ENCODE measurements at regions of chr1 and their contacts with region 1.

Region 1: GRCh38 chr1:101262630-101263348 is 26.0 kb downstream of the S1PR1 start:
- DNase-seq: no peak
- ATAC-seq: peak; percentile 49
- H3K4me3 Mint-ChIP-seq: peak overlapping the region; percentile 37
- H3K27ac Mint-ChIP-seq: peak overlapping the region; percentile 27
- H3K4me1 Mint-ChIP-seq: peaks cover 60% of the 10 kb centered on the region
- H3K27me3 Mint-ChIP-seq: no peaks in the 10 kb centered on the region
- CTCF ChIP-seq: no peak

Region 2: DNA sequence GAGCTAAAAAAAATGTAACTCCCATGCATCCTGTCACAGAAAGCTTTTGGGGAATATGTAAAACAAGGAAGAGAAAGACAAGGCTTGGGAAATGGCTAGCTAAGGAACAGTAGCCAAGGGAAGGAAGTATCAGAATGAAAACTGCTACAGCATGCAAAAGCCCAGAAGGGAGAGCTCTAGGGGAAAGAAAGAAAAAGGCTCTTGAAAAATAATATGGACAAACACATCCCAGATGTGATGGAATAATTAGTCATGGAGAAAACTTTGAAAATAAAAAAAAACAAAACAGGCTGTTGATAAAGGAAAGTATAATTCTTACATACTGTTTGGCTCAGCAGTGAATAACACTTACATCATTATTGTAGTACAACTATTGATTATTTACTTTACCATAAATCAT is 591.2 kb before region 1 on chr1:
- CTCF ChIA-PET with region 1: no interaction called
- POLR2A ChIA-PET with region 1: no interaction called
- intact Hi-C with region 1: no loop called
- DNase-seq: no peak
- ATAC-seq: no peak
- H3K4me3 Mint-ChIP-seq: no peak overlapping the region
- H3K27ac Mint-ChIP-seq: no peak overlapping the region
- H3K4me1 Mint-ChIP-seq: no peaks in the 10 kb centered on the region
- H3K27me3 Mint-ChIP-seq: peaks cover 7% of the 10 kb centered on the region
- CTCF ChIP-seq: no peak

Region 3: DNA sequence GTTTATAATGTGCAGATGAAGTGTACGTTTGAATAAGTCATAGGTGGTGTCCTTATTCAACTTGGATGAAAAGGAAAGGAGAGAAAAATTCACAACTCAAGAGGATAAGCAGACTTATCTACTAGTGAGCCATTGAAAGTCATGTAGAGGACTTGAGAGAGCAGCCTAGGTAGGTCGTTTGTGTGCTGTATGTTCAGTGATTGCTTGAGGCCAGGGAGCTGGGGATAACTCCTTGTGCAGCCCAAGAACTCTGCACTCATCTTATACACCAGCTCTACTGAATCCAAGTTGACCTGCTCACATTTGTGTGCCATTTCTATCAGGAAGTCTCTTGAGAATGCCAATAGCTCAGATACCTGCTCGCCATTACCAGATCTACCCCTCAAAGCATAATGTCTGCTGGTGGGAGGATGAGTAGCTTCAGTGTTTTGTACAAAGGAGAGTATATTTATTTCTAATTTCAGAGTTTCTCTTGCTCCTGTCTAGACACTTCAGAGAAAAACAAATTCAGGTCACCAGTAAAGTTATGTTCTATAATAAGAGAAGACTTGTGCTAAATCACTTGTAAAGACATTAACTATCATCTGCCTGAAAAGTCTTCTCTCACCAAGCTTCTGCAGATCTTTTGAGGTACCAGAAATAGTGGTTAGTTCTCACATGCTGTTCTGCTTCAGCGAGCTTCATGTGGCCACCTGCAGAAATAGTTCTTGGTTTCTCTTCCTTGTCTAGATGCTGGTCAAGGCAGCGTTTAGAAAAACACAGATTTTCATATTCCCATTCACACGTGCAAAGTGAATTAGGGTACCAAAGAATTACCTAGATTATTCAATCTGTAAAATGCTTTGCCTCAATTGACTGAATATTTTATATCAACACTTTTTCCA is 15.1 kb before region 1 on chr1:
- CTCF ChIA-PET with region 1: no interaction called
- POLR2A ChIA-PET with region 1: interaction called, 12 read pairs
- intact Hi-C with region 1: loop called (anchors 1 kb)
- DNase-seq: no peak
- ATAC-seq: peak; percentile 89
- H3K4me3 Mint-ChIP-seq: peak overlapping the region; percentile 44
- H3K27ac Mint-ChIP-seq: peak overlapping the region; percentile 82
- H3K4me1 Mint-ChIP-seq: peaks cover 82% of the 10 kb centered on the region
- H3K27me3 Mint-ChIP-seq: no peaks in the 10 kb centered on the region
- CTCF ChIP-seq: no peak

Region 4: DNA sequence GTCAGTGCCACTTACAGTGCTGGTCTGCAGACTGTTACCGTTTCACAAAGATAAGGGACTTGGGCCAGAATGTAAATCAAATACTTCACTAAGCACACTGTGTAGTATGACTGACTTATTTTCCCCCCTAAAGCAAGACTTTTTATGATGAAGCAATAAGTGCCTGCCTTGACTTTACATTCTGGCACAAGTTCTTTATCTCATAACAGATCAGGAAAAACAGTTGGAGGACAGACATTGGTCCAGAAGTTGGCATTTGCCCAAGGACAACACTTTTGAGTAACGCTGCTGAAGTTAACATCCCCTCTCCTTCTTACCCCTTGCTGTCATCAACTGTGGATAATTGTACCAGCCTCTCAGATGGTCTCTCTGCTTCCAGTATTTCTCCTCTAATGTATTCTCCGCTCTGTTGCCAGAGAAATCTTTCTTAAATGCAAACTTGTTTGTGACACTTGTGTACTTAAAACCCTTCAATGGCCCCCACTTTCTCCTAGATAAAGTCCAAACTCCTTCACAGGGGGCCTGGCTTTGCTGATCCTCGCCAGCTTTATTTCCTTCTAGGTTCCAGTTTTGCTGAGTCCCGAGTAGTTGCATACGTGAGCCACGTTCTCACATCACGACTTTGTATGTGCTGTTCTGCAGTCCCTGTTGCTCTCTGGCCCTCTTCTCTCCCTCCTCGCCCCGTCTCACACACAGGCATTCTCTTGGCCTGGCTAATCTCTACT is 19.7 kb after region 1 on chr1:
- CTCF ChIA-PET with region 1: interaction called, 6 read pairs
- POLR2A ChIA-PET with region 1: interaction called, 3 read pairs
- intact Hi-C with region 1: loop called (anchors 2 kb)
- DNase-seq: no peak
- ATAC-seq: no peak
- H3K4me3 Mint-ChIP-seq: no peak overlapping the region
- H3K27ac Mint-ChIP-seq: no peak overlapping the region
- H3K4me1 Mint-ChIP-seq: peaks cover 24% of the 10 kb centered on the region
- H3K27me3 Mint-ChIP-seq: no peaks in the 10 kb centered on the region
- CTCF ChIP-seq: no peak